ENCODE measurements at regions of chr11 and their contacts with region 1.

Region 1: GRCh38 chr11:128831174-128832120 is 35.6 kb downstream of the KCNJ1 start:
- DNase-seq: peak; percentile 92
- ATAC-seq: peak; percentile 90
- H3K4me3 Mint-ChIP-seq: peak overlapping the region; percentile 66
- H3K27ac Mint-ChIP-seq: peak overlapping the region; percentile 95
- H3K4me1 Mint-ChIP-seq: peaks cover 28% of the 10 kb centered on the region
- H3K27me3 Mint-ChIP-seq: no peaks in the 10 kb centered on the region

Region 2: DNA sequence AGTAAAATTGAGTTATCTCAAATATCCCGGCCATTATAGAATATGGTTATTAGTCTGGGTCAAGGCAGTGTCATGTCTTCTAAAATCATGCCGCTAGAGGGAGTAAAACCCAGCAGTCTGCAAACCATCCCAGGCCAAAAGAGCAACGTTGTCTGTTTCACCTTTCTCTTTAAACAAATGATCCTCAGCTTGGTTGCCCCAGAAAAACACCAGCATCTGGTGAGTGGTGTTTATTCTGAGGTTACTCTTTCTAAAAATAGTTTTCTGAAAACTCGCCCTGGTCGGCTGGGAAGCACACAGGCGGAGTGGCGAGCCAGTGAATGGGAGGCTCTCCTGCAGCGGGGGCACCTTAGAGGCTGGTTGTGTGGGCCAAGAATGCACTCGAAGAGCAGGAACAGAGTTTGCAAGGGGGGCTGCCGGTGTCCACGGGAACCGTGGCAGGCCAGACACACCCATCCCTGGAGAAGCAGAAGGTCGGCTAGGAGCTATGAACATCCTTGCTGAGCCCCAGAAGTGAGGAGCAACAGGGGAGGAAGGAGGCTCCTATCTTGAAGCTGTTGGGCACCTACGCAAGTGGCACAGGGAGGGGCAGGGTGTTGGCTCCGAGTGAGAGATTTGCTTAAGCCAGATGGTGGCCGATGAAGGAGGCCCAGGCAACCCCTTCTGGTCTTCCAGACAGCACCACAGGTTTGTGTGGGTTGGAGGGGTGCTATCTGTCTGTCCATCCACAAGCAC is 541.2 kb before region 1 on chr11:
- CTCF ChIA-PET with region 1: interaction called, 10 read pairs
- DNase-seq: peak; percentile 86
- ATAC-seq: peak; percentile 70
- H3K4me3 Mint-ChIP-seq: peak overlapping the region; percentile 86
- H3K27ac Mint-ChIP-seq: peak overlapping the region; percentile 92
- H3K4me1 Mint-ChIP-seq: peaks cover 86% of the 10 kb centered on the region
- H3K27me3 Mint-ChIP-seq: no peaks in the 10 kb centered on the region

Region 3: DNA sequence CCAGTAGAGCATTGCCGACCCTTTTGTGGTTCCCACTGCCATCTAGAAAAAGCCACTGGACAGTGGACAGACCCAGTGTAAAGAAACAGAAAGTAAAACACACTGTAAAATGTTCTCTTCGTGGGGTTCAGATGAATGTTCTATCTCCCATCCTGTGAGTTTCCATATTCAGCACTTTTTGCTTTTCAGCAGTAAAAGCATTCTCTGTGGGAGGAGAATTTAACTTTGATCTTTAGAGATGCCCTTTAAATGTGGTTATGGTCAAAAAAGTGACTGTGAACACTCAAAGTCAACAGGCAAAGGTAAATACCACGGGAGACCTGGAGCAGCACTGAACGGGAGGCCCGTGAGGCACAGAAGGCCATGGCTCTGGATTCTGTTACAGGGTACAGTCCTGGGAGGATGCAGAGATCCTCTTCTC is 83.7 kb before region 1 on chr11:
- CTCF ChIA-PET with region 1: no interaction called
- DNase-seq: no peak
- ATAC-seq: peak; percentile 49
- H3K4me3 Mint-ChIP-seq: peak overlapping the region; percentile 44
- H3K27ac Mint-ChIP-seq: peak overlapping the region; percentile 82
- H3K4me1 Mint-ChIP-seq: peaks cover 56% of the 10 kb centered on the region
- H3K27me3 Mint-ChIP-seq: no peaks in the 10 kb centered on the region

Region 4: GRCh38 chr11:128776424-128777284 is 54.8 kb before region 1 on chr11:
- CTCF ChIA-PET with region 1: interaction called, 35 read pairs
- DNase-seq: peak; percentile 47
- ATAC-seq: peak; percentile 52
- H3K4me3 Mint-ChIP-seq: no peak overlapping the region
- H3K27ac Mint-ChIP-seq: peak overlapping the region; percentile 64
- H3K4me1 Mint-ChIP-seq: peaks cover 44% of the 10 kb centered on the region
- H3K27me3 Mint-ChIP-seq: no peaks in the 10 kb centered on the region

Region 5: DNA sequence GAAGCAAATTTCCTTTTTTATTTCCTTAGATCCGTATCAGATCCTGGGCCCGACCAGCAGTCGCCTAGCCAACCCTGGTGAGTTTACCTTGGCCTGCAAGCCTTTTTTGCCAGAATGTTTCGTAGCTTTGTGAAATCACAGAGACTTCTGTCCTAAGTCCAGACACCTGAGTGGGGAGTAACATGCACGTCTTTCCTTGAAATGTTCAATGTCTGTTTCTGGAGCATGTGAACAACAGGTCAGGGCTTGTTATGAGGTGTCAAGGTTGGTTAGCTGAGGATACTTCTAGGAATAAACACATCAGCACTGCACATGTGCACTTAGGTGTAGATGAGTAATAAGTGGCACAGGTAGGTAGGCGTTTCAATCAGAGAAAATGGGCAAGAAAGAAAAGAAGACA is 22.3 kb before region 1 on chr11:
- CTCF ChIA-PET with region 1: interaction called, 10 read pairs
- DNase-seq: no peak
- ATAC-seq: no peak
- H3K4me3 Mint-ChIP-seq: no peak overlapping the region
- H3K27ac Mint-ChIP-seq: no peak overlapping the region
- H3K4me1 Mint-ChIP-seq: peaks cover 14% of the 10 kb centered on the region
- H3K27me3 Mint-ChIP-seq: no peaks in the 10 kb centered on the region

Region 6: GRCh38 chr11:128859563-128860441 is 28.4 kb after region 1 on chr11:
- CTCF ChIA-PET with region 1: interaction called, 19 read pairs
- DNase-seq: peak; percentile 84
- ATAC-seq: peak; percentile 90
- H3K4me3 Mint-ChIP-seq: no peak overlapping the region
- H3K27ac Mint-ChIP-seq: no peak overlapping the region
- H3K4me1 Mint-ChIP-seq: peaks cover 6% of the 10 kb centered on the region
- H3K27me3 Mint-ChIP-seq: peaks cover 11% of the 10 kb centered on the region

Region 7: GRCh38 chr11:128908391-128909246 is 77.2 kb after region 1 on chr11:
- CTCF ChIA-PET with region 1: no interaction called
- DNase-seq: no peak
- ATAC-seq: no peak
- H3K4me3 Mint-ChIP-seq: no peak overlapping the region
- H3K27ac Mint-ChIP-seq: no peak overlapping the region
- H3K4me1 Mint-ChIP-seq: peaks cover 15% of the 10 kb centered on the region
- H3K27me3 Mint-ChIP-seq: peaks cover 47% of the 10 kb centered on the region

Region 8: DNA sequence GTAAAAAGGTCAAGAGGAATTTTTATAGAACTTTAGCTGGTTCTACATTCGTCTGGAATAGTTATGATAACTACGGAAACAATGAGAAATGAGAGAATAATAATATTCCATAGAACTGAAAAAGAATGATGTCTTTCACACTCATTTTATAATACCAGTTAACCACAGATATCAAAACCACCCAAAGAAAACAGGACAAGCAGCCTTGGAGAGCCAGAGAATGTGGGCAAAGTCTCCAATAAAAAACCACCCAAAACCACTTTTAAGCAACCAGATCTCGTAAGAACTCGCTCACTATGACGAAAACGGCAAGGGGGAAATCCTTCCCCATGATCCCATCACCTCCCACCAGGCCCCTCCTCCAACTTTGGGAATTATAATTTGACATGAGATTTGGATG is 299.9 kb after region 1 on chr11:
- CTCF ChIA-PET with region 1: no interaction called
- DNase-seq: no peak
- ATAC-seq: no peak
- H3K4me3 Mint-ChIP-seq: no peak overlapping the region
- H3K27ac Mint-ChIP-seq: no peak overlapping the region
- H3K4me1 Mint-ChIP-seq: no peaks in the 10 kb centered on the region
- H3K27me3 Mint-ChIP-seq: no peaks in the 10 kb centered on the region

Measured in activated CD8-positive, alpha-beta memory T cell treated with anti-CD3 and anti-CD28 coated beads, Interleukin-2, amount 10 ng/mL, durations not matched to agents 7 days and 5 days (primary cell).